ENCODE measurements at regions of chr3 and their contacts with region 1.

Region 1: GRCh38 chr3:69306239-69307185 is 79.4 kb downstream of the FRMD4B start:
- DNase-seq: peak; percentile 82
- ATAC-seq: peak; percentile 98
- H3K4me3 Mint-ChIP-seq: peak overlapping the region; percentile 17
- H3K27ac Mint-ChIP-seq: peak overlapping the region; percentile 65
- H3K4me1 Mint-ChIP-seq: peaks cover 8% of the 10 kb centered on the region
- H3K27me3 Mint-ChIP-seq: no peaks in the 10 kb centered on the region

Region 2: DNA sequence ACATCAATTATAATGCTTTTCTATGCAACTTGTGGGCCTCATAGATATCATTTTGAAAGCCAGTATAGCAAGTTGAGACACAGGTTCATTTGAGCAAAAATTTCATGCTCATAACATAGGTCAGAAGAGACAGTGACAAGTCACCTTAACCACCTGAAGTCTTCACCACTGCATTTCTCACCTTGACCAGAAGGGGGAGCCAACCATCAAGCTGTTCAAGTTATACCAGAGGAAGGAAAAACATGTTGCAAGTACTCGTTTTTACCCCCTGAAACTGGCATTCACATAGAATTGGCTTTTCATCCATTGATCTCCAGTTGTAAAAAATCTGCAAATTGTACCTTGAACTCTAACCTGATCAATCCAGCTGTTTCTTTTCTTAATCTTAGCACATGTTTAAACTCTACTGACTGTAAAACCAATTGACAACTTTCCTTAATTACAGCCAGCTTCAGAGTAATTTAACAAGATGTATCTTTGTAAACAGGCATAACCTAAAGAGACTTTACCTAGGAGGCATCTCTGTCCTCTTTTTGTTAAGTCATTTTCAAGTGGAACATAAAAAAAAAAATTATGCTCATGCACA is 185.5 kb before region 1 on chr3:
- CTCF ChIA-PET with region 1: interaction called, 96 read pairs
- POLR2A ChIA-PET with region 1: interaction called, 3 read pairs
- DNase-seq: peak; percentile 90
- ATAC-seq: peak; percentile 72
- H3K4me3 Mint-ChIP-seq: no peak overlapping the region
- H3K27ac Mint-ChIP-seq: no peak overlapping the region
- H3K4me1 Mint-ChIP-seq: peaks cover 5% of the 10 kb centered on the region
- H3K27me3 Mint-ChIP-seq: peaks cover 2% of the 10 kb centered on the region

Region 3: DNA sequence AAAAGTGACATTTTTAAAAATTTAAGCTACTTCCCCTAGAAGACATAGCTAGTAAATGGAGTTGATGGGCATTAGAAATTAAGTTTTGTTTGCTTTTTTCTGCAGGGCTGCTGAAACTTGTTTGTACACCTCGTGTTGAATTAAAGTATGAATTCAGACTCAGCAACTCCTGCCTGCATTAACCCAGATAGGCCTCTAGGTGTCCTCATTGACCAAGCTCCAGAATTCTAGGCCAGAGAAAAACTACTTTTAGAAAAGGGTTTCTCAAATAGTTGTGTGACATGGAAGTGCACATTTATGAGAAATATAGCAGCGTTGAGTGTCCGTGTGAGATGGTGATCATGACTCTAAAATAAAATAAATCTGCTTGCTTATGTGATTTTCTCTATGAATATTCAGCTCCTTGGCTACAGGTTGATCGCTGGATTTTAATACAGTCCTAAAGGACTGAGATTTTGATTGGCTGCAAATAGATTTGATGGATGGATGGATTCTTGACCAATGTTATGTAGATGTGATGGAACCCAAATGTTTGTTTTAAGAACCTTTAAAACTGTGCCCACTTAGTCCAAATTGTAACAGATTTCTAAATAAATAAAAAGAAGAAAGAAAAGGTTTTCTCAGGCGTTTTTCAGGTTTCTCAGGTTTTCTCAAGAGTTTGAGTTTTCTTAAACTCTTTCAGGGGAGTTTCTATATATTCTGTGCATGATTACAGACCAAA is 144.8 kb before region 1 on chr3:
- CTCF ChIA-PET with region 1: interaction called, 315 read pairs
- POLR2A ChIA-PET with region 1: interaction called, 3 read pairs
- DNase-seq: peak; percentile 62
- ATAC-seq: peak; percentile 60
- H3K4me3 Mint-ChIP-seq: no peak overlapping the region
- H3K27ac Mint-ChIP-seq: no peak overlapping the region
- H3K4me1 Mint-ChIP-seq: peaks cover 11% of the 10 kb centered on the region
- H3K27me3 Mint-ChIP-seq: peaks cover 7% of the 10 kb centered on the region

Region 4: DNA sequence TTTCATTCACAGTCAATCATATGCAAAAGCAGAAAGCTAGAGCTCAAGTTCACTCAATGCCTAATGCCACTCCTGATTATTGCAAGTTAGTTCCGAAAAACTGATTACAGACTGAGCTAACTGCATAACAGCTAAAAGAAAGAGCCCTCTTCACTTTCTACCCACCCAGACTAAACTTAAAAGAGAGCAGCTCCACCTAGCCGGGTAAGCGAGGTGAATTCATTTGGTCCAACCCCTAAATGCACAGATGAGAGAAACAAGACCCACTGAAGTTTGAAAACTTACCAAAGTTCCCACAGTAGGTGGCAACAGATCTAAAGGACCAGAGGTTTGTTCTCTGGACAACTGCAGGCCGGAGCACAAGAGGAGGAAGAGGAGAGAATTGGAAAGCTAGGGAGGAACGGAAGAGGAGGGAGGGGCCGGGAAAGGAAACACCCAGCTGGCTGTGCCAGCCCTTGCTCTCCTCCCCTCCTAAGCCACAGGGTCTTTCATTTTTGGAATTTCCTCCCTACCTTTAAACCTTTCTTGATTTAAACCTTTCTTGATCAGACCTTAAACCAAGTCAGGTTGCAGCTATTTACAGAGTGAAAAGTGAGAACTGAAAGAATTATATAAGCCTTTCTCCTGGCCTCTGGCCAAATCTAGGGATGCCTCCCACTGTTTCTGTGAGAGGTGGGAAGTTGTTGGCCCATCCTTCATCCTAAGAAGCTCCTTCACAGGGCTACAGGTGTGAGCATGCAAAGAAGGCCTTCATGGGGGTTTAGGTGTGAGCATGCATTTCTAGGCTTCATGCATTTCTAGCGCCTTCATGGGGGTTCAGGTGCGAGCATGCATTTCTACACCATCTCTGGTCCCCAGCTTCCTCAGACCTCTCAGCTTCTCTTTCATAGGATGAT is 69.5 kb before region 1 on chr3:
- CTCF ChIA-PET with region 1: interaction called, 13 read pairs
- POLR2A ChIA-PET with region 1: no interaction called
- DNase-seq: peak; percentile 32
- ATAC-seq: peak; percentile 45
- H3K4me3 Mint-ChIP-seq: peak overlapping the region; percentile 71
- H3K27ac Mint-ChIP-seq: peak overlapping the region; percentile 82
- H3K4me1 Mint-ChIP-seq: peaks cover 19% of the 10 kb centered on the region
- H3K27me3 Mint-ChIP-seq: no peaks in the 10 kb centered on the region

Region 5: GRCh38 chr3:69250014-69250413 is 56.5 kb before region 1 on chr3:
- CTCF ChIA-PET with region 1: no interaction called
- POLR2A ChIA-PET with region 1: no interaction called
- DNase-seq: peak; percentile 45
- ATAC-seq: peak; percentile 49
- H3K4me3 Mint-ChIP-seq: peak overlapping the region; percentile 40
- H3K27ac Mint-ChIP-seq: no peak overlapping the region
- H3K4me1 Mint-ChIP-seq: peaks cover 7% of the 10 kb centered on the region
- H3K27me3 Mint-ChIP-seq: peaks cover 10% of the 10 kb centered on the region

Region 6: GRCh38 chr3:69294014-69294775 is 12.3 kb before region 1 on chr3:
- CTCF ChIA-PET with region 1: interaction called, 28 read pairs
- POLR2A ChIA-PET with region 1: interaction called, 4 read pairs
- DNase-seq: no peak
- ATAC-seq: no peak
- H3K4me3 Mint-ChIP-seq: no peak overlapping the region
- H3K27ac Mint-ChIP-seq: no peak overlapping the region
- H3K4me1 Mint-ChIP-seq: no peaks in the 10 kb centered on the region
- H3K27me3 Mint-ChIP-seq: no peaks in the 10 kb centered on the region

Region 7: DNA sequence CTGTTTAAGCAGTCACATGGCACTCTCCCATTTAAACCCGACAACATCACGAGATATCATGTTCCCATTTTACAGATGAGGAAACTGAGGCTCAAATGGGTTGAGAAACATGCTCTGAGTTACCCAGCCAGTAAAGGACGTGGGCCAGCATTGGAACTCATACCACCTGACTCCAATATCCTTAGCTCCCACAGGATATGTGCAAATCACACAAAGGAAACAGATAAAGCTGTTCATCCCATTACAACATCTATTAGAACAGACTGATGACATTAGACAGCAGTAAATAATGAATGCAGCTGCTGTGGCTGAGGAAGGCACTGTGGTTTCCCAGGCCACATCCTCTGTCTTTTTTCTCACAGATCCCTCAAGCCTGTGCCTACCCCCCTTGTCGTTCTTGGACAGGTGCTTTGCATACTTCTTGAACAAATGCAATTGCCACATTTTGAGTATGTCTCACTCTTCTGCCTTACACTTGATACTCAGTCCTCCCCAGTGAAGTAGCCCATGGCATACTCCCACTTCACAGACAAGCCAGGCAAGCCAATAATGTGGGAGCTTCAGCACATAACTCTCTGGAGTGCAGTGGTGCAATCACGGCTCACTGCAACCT is 61.7 kb after region 1 on chr3:
- CTCF ChIA-PET with region 1: interaction called, 14 read pairs
- POLR2A ChIA-PET with region 1: no interaction called
- DNase-seq: peak; percentile 80
- ATAC-seq: peak; percentile 87
- H3K4me3 Mint-ChIP-seq: no peak overlapping the region
- H3K27ac Mint-ChIP-seq: no peak overlapping the region
- H3K4me1 Mint-ChIP-seq: peaks cover 34% of the 10 kb centered on the region
- H3K27me3 Mint-ChIP-seq: peaks cover 21% of the 10 kb centered on the region